Caco-2 (cell line): ENCODE measurements at regions of chr4 and their contacts with region 1.

Region 1: DNA sequence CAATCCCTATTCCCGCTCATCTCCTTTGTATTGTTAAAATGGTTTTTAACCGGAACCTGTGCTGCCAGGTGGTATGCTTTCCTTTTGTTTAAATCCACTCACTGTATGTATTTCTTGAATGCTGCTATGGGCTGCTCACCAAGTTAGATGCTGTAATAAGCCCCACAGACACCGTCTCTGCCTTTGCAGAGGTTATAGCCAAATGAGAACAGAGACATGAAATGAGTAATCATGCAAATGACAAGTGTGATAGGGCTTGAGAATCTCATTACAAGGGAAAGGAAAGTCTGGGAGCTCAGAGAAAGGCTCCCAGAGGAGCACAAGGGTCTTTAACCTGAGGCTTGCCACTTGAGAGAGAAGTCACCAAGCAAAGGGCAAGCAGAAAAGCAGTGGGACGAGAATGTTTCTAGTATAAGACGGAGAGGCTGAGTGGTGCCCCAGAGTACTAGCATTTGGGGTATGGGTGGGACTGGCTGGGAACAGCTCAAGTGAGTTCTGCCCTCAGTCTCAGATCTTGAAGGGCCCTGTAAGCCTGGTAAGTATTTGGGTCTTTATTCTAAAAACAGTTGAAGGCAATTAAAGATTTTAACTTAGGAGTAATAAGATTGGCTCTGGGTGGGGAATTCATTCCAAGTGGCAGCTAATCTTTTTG is 110.8 kb upstream of the H2AZ1 start:
- DNase-seq: no peak
- H3K4me3 ChIP-seq: no peak overlapping the region
- H3K4me3 Mint-ChIP-seq: no peak overlapping the region
- H3K27ac Mint-ChIP-seq: no peak overlapping the region
- H3K4me1 ChIP-seq: no peaks in the 10 kb centered on the region
- H3K4me1 Mint-ChIP-seq: no peaks in the 10 kb centered on the region
- H3K27me3 ChIP-seq: no peaks in the 10 kb centered on the region
- H3K27me3 Mint-ChIP-seq: no peaks in the 10 kb centered on the region
- CTCF ChIP-seq: no peak

Region 2: DNA sequence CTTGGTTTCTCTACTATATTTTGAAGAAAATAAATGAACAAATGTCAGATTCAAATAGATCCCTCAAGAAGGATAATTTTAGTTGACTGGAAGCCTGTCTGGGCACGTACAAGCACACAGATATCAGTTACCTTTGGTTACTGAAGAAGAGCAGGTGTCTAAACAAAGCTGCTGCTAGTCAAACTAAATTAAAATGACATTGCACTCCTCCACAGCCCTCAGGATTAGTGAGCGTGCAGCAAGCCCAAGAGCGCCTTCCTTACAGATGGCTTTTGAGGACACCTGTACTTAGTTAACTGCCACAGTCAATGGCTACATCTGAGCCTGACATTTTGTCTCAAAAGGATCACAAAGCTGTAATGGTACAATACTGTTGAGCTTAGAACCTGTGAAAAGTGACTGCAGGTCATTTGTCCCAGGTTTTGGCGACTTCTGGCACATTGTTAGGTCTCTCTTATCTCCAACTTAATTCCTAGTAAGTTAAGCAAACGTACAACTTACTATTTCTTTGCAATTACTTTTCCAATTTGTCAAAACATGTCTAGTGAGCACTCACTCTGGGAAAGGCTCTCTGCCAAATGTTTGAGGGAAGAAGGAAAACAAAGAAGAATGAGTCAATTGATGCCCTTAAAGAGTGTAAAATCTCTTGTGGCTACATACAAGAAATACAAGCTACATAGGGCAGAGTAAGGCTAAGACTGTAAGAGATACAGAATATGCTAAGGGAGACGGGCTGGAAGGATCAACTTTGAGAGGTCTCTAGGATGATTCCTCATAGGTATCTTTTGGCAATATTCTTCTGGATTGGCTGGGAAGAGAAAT is 269.9 kb before region 1 on chr4:
- CTCF ChIA-PET with region 1: no interaction called
- POLR2A ChIA-PET with region 1: no interaction called
- intact Hi-C with region 1: no loop called
- DNase-seq: no peak
- H3K4me3 ChIP-seq: no peak overlapping the region
- H3K4me3 Mint-ChIP-seq: no peak overlapping the region
- H3K27ac Mint-ChIP-seq: no peak overlapping the region
- H3K4me1 ChIP-seq: no peaks in the 10 kb centered on the region
- H3K4me1 Mint-ChIP-seq: no peaks in the 10 kb centered on the region
- H3K27me3 ChIP-seq: no peaks in the 10 kb centered on the region
- H3K27me3 Mint-ChIP-seq: peaks cover 22% of the 10 kb centered on the region
- CTCF ChIP-seq: no peak

Region 3: DNA sequence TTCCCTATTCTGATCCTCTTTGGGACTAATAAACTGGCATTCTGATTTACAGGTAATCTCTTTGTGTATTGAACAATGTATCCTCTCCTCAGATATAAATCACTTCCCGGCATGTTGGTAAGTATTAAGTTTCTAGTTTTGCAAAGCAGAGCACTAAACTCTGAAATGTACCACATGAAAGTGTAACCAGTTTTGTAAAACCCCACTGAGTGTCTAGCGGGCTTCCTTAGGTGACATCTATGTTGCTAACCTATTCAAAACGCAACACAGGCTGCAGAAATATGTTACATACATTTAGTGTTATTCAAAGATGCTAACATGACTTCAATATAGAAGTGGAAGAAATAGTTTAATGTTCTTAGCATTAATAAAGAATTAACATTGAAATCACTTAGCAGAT is 139.7 kb before region 1 on chr4:
- CTCF ChIA-PET with region 1: no interaction called
- POLR2A ChIA-PET with region 1: no interaction called
- intact Hi-C with region 1: no loop called
- DNase-seq: no peak
- H3K4me3 ChIP-seq: no peak overlapping the region
- H3K4me3 Mint-ChIP-seq: no peak overlapping the region
- H3K27ac Mint-ChIP-seq: no peak overlapping the region
- H3K4me1 ChIP-seq: no peaks in the 10 kb centered on the region
- H3K4me1 Mint-ChIP-seq: no peaks in the 10 kb centered on the region
- H3K27me3 ChIP-seq: no peaks in the 10 kb centered on the region
- H3K27me3 Mint-ChIP-seq: no peaks in the 10 kb centered on the region
- CTCF ChIP-seq: no peak

Region 4: GRCh38 chr4:99998062-99998867 is 62.6 kb before region 1 on chr4:
- CTCF ChIA-PET with region 1: no interaction called
- POLR2A ChIA-PET with region 1: no interaction called
- intact Hi-C with region 1: loop called (anchors 5 kb)
- DNase-seq: peak in 1 of 2 experiments; percentile 5
- H3K4me3 ChIP-seq: no peak overlapping the region
- H3K4me3 Mint-ChIP-seq: no peak overlapping the region
- H3K27ac Mint-ChIP-seq: no peak overlapping the region
- H3K4me1 ChIP-seq: no peaks in the 10 kb centered on the region
- H3K4me1 Mint-ChIP-seq: no peaks in the 10 kb centered on the region
- H3K27me3 ChIP-seq: no peaks in the 10 kb centered on the region
- H3K27me3 Mint-ChIP-seq: peaks cover 3% of the 10 kb centered on the region
- CTCF ChIP-seq: no peak

Region 5: DNA sequence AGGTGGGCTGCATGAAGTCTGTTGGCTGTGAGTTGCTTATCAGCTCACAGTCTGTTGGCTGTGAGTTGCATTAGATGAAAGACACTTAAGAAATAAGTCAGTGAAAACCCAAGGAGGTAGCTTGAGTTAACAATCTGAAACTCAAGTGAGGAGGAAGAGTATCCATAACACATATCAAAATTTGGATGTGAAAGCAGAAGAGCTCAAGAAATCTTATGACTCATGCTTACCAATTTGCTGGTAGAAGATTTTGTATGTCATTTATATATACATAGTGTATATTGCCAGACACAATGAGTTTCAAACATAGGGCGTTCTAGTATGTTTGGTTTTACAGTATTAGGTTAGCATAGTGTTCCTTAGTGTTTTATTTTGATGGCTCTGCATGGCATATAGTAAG is 22.0 kb after region 1 on chr4:
- CTCF ChIA-PET with region 1: no interaction called
- POLR2A ChIA-PET with region 1: no interaction called
- intact Hi-C with region 1: no loop called
- DNase-seq: no peak
- H3K4me3 ChIP-seq: no peak overlapping the region
- H3K4me3 Mint-ChIP-seq: no peak overlapping the region
- H3K27ac Mint-ChIP-seq: no peak overlapping the region
- H3K4me1 ChIP-seq: peaks cover 28% of the 10 kb centered on the region; the same call in 1 of the 2 replicates
- H3K4me1 Mint-ChIP-seq: peaks cover 14% of the 10 kb centered on the region
- H3K27me3 ChIP-seq: no peaks in the 10 kb centered on the region
- H3K27me3 Mint-ChIP-seq: peaks cover 3% of the 10 kb centered on the region
- CTCF ChIP-seq: no peak